ENCODE measurements at regions of chr5 and their contacts with region 1.

Region 1: DNA sequence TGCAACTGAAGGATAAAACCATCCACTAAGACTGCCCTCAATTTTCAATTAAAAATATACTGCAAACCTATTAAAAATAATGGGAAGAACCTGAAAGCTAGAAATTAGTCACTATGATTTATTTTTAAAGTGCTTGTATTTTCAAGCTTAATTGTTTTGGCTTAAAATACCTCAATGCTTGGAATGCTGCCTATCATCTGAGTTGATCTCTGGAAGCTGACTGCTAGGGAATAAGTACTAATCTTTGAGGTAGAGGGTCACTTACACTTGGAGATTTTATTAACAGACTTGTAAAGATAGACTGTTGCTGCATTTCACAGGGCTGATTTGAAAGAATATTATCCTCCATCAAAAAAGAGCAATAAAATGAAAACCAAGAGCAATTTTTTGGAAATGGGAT is 6.2 kb downstream of the PCSK1 start:
- DNase-seq: no peak
- ATAC-seq: no peak
- H3K4me3 ChIP-seq: no peak overlapping the region
- H3K27ac ChIP-seq: no peak overlapping the region
- H3K4me1 ChIP-seq: no peaks in the 10 kb centered on the region
- H3K27me3 ChIP-seq: peaks cover 17% of the 10 kb centered on the region
- CTCF ChIP-seq: no peak

Region 2: GRCh38 chr5:96113170-96113939 is 313.5 kb before region 1 on chr5:
- CTCF ChIA-PET with region 1: no interaction called
- POLR2A ChIA-PET with region 1: no interaction called
- in situ Hi-C with region 1: no loop called
- intact Hi-C with region 1: no loop called
- DNase-seq: no peak
- ATAC-seq: no peak
- H3K4me3 ChIP-seq: no peak overlapping the region
- H3K27ac ChIP-seq: peak overlapping the region; percentile 52; the same call in 1 of the 2 replicates
- H3K4me1 ChIP-seq: peaks cover 8% of the 10 kb centered on the region; the same call in 1 of the 2 replicates
- H3K27me3 ChIP-seq: no peaks in the 10 kb centered on the region
- CTCF ChIP-seq: no peak

Region 3: GRCh38 chr5:96388176-96388575 is 38.7 kb before region 1 on chr5:
- CTCF ChIA-PET with region 1: no interaction called
- POLR2A ChIA-PET with region 1: interaction called, 10 read pairs
- in situ Hi-C with region 1: no loop called
- intact Hi-C with region 1: no loop called
- DNase-seq: no peak
- ATAC-seq: no peak
- H3K4me3 ChIP-seq: no peak overlapping the region
- H3K27ac ChIP-seq: no peak overlapping the region
- H3K4me1 ChIP-seq: no peaks in the 10 kb centered on the region
- H3K27me3 ChIP-seq: peaks cover 5% of the 10 kb centered on the region
- CTCF ChIP-seq: no peak

Region 4: DNA sequence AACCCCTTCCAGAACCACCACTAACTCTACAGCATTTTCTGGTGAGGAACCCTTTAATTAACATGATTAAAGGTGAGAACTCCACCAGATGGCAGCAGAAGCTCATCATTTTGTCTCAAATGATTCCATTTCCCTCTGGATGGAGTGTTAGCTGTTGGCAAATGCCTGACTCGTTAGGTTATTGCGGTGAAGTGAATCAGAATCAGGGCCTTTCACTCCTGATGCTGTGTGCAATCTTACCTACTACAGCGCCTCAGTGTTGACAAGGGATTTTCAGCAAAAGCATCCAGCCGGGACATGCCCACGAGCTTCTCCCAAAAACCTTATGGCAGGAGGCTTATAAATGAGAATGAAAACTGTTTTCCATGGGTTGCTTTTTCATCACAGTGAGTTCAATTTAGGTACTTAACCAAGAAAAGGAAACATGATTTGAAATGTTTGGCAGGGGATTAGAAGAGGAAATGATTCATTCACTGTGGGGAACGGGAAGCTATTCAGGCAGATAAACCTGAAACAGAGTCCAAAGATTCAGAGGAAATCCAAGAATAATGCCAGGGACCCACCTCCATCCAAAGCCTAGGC is 187.4 kb after region 1 on chr5:
- CTCF ChIA-PET with region 1: no interaction called
- POLR2A ChIA-PET with region 1: no interaction called
- in situ Hi-C with region 1: no loop called
- intact Hi-C with region 1: no loop called
- DNase-seq: peak; percentile 96
- ATAC-seq: peak; percentile 93
- H3K4me3 ChIP-seq: peak overlapping the region in 1 of 2 experiments; percentile 26; a peak in 2 of 4 replicates
- H3K27ac ChIP-seq: no peak overlapping the region
- H3K4me1 ChIP-seq: no peaks in the 10 kb centered on the region; the same call in 1 of the 2 replicates
- H3K27me3 ChIP-seq: peaks cover 3% of the 10 kb centered on the region; the same call in 1 of the 2 replicates
- CTCF ChIP-seq: peak; percentile 66

Measured in Panc1 (cell line).